ENCODE measurements at regions of chr17 and their contacts with region 1.

Region 1: DNA sequence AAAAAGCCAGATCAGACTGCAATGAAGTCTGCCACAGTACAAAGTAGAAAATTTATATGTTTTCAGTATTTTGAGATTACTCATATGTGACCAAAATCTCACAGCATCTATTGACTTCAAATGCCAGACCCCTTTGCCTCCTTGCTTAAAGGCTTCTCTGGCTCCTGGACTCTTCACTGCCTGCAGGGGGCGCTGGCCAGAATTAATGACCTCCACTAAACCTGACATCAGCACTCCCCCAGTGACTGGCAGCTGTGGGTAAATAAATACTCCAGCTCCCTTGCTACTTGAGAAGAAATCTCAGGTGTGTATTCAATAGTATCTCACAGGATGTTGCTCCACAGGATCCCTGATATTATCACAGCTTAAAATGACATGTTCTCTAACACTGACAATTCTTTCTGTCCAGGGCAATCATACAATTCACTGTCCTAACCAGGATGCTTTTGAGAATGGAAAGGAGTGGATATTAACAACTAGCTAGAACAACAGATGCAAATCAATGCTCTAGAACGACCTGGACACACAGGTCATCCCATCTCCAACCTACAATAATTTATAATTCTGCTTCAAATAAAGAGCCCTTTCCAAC is 4.0 kb downstream of the BECN1 start:
- DNase-seq: no peak
- ATAC-seq: no peak

Region 2: GRCh38 chr17:42577532-42578281 is 242.3 kb before region 1 on chr17 and contains the start of gene PSMC3IP:
- intact Hi-C with region 1: loop called (anchors 10 kb)
- DNase-seq: peak; percentile 97
- ATAC-seq: peak; percentile 95
- total RNA-seq, gene PSMC3IP: 3.4 TPM

Region 3: GRCh38 chr17:42720996-42721583 is 99.0 kb before region 1 on chr17:
- intact Hi-C with region 1: loop called (anchors 2 kb)
- DNase-seq: no peak
- ATAC-seq: peak; percentile 56

Region 4: DNA sequence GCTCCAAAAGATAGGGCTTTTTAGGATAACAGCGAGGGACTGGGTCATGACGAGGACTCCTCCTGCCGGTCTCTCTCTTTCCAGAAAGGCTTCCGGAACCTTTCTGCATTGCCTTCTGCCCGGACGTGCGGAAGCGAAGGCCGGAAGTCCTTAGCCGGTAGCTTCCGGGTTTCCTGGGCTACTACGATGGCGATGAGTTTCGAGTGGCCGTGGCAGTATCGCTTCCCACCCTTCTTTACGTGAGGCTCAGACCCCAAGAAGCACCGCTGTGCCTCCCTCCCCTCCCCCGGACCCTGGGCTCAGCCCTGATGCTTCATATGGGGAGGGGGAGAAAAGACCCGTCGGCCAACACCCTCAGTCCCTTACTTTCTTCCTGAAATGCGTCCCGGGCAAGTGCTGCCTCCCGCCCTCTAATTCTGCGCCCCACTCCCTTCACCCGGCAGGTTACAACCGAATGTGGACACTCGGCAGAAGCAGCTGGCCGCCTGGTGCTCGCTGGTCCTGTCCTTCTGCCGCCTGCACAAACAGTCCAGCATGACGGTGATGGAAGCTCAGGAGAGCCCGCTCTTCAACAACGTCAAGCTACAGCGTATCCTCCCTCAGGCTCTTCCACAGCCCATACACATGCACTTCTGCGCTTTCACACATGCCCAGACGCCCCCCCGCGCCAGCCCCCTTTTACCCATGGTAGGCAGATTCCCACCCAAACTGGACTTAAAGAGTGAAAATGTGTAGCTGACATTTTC is 46.6 kb before region 1 on chr17 and contains the start of gene VPS25:
- intact Hi-C with region 1: loop called (anchors 10 kb)
- DNase-seq: peak; percentile 85
- ATAC-seq: peak; percentile 93
- total RNA-seq, gene VPS25: 33.2 TPM

Region 5: GRCh38 chr17:42843358-42843934 is 23.4 kb after region 1 on chr17:
- intact Hi-C with region 1: no loop called
- DNase-seq: no peak
- ATAC-seq: peak; percentile 65

Measured in Right ventricle myocardium inferior (tissue), 1 donor.